Caco-2 (cell line): ENCODE measurements at regions of chr1 and their contacts with region 1.

Region 1: DNA sequence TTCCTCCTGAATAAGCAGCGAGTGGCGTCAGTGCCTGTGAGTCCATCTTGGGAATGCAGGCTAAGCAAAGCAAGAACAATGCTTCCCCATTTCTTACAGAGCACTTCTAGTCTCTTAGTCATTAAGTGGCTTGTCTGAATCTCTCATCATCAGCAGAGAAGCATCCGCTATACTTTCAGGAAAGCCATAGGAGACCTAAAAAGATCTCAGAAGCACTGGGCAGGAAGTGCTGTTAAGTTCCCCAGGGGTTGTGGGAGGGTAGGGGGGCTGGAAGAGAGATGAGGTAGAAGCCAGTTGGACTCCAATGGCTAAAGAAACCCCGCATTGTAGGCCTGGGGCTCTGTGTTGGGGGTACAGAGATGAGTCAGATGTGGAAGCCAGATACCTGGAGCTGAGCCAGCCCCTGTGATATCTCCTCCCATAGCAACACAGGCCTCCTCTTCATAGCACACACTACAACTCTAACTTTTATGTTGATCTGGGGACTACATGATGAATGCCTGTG is 44.9 kb downstream of the SYT6 start:
- DNase-seq: no peak
- H3K4me3 ChIP-seq: no peak overlapping the region
- H3K4me3 Mint-ChIP-seq: no peak overlapping the region
- H3K27ac Mint-ChIP-seq: no peak overlapping the region
- H3K4me1 ChIP-seq: no peaks in the 10 kb centered on the region
- H3K4me1 Mint-ChIP-seq: peaks cover 6% of the 10 kb centered on the region
- H3K27me3 ChIP-seq: no peaks in the 10 kb centered on the region
- H3K27me3 Mint-ChIP-seq: no peaks in the 10 kb centered on the region
- CTCF ChIP-seq: no peak

Region 2: GRCh38 chr1:113978863-113979702 is 129.7 kb before region 1 on chr1 and contains the start of gene OLFML3:
- CTCF ChIA-PET with region 1: interaction called, 23 read pairs
- POLR2A ChIA-PET with region 1: no interaction called
- intact Hi-C with region 1: loop called (anchors 1 kb)
- DNase-seq: peak; percentile 77 to 83
- H3K4me3 ChIP-seq: peak within 1 kb of the TSS; percentile 18
- H3K4me3 Mint-ChIP-seq: peak within 1 kb of the TSS; percentile 66
- H3K27ac Mint-ChIP-seq: peak within 1 kb of the TSS; percentile 93
- H3K4me1 ChIP-seq: peaks cover 15% of the 10 kb centered on the region
- H3K4me1 Mint-ChIP-seq: no peaks in the 10 kb centered on the region
- H3K27me3 ChIP-seq: no peaks in the 10 kb centered on the region
- H3K27me3 Mint-ChIP-seq: no peaks in the 10 kb centered on the region
- CTCF ChIP-seq: peak; percentile 44 to 63
- total RNA-seq, gene OLFML3: 29.1 and 36.5 TPM in 2 replicates

Region 3: GRCh38 chr1:114033974-114034373 is 74.8 kb before region 1 on chr1:
- CTCF ChIA-PET with region 1: no interaction called
- POLR2A ChIA-PET with region 1: no interaction called
- intact Hi-C with region 1: loop called (anchors 1 kb)
- DNase-seq: peak; percentile 71 to 72
- H3K4me3 ChIP-seq: no peak overlapping the region
- H3K4me3 Mint-ChIP-seq: no peak overlapping the region
- H3K27ac Mint-ChIP-seq: no peak overlapping the region
- H3K4me1 ChIP-seq: peaks cover 36% of the 10 kb centered on the region
- H3K4me1 Mint-ChIP-seq: no peaks in the 10 kb centered on the region
- H3K27me3 ChIP-seq: no peaks in the 10 kb centered on the region
- H3K27me3 Mint-ChIP-seq: no peaks in the 10 kb centered on the region
- CTCF ChIP-seq: no peak

Region 4: GRCh38 chr1:114145504-114146151 is 36.8 kb after region 1 on chr1:
- CTCF ChIA-PET with region 1: no interaction called
- POLR2A ChIA-PET with region 1: no interaction called
- intact Hi-C with region 1: loop called (anchors 5 kb)
- DNase-seq: no peak
- H3K4me3 ChIP-seq: no peak overlapping the region
- H3K4me3 Mint-ChIP-seq: no peak overlapping the region
- H3K27ac Mint-ChIP-seq: no peak overlapping the region
- H3K4me1 ChIP-seq: no peaks in the 10 kb centered on the region
- H3K4me1 Mint-ChIP-seq: peaks cover 6% of the 10 kb centered on the region
- H3K27me3 ChIP-seq: no peaks in the 10 kb centered on the region
- H3K27me3 Mint-ChIP-seq: peaks cover 5% of the 10 kb centered on the region
- CTCF ChIP-seq: no peak

Region 5: GRCh38 chr1:114219172-114219868 is 110.5 kb after region 1 on chr1:
- CTCF ChIA-PET with region 1: interaction called, 3 read pairs
- POLR2A ChIA-PET with region 1: no interaction called
- intact Hi-C with region 1: loop called (anchors 2 kb)
- DNase-seq: peak in 1 of 2 experiments; percentile 11
- H3K4me3 ChIP-seq: no peak overlapping the region
- H3K4me3 Mint-ChIP-seq: no peak overlapping the region
- H3K27ac Mint-ChIP-seq: no peak overlapping the region
- H3K4me1 ChIP-seq: no peaks in the 10 kb centered on the region
- H3K4me1 Mint-ChIP-seq: no peaks in the 10 kb centered on the region
- H3K27me3 ChIP-seq: no peaks in the 10 kb centered on the region
- H3K27me3 Mint-ChIP-seq: peaks cover 5% of the 10 kb centered on the region
- CTCF ChIP-seq: peak in 1 of 2 experiments; percentile 20

Region 6: DNA sequence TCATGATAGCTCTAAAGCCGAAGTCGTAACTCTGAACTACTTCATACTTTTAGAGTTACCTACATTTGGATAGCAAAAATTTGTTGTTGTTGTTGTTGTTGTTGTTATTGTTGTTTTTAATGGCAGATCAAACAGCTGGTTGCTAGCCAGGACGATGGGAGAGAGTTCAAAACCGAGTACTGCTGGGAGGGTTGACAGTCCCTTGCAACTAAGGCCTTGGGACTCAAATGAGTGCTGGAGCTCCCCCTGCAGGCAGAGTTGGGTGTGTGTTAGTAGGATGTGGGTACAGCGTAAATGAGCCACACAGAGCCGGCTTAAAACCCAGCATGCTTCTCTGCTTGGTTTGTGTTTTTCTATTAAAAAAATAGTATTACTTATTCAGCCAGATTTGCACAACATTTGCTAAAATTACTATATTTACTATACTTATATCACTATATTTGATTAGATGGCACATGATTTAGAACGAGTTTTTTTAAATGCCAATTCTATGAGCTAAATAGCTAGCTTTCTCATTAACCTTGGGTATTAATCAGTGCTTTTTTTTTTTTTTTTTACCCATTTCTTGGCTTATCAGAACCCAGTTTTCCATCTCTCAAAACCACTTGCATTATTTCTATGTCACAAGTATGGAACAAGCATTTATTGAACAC is 174.1 kb after region 1 on chr1:
- CTCF ChIA-PET with region 1: interaction called, 39 read pairs
- POLR2A ChIA-PET with region 1: no interaction called
- intact Hi-C with region 1: loop called (anchors 2 kb)
- DNase-seq: peak; percentile 76 to 77
- H3K4me3 ChIP-seq: no peak overlapping the region
- H3K4me3 Mint-ChIP-seq: no peak overlapping the region
- H3K27ac Mint-ChIP-seq: no peak overlapping the region
- H3K4me1 ChIP-seq: no peaks in the 10 kb centered on the region
- H3K4me1 Mint-ChIP-seq: no peaks in the 10 kb centered on the region
- H3K27me3 ChIP-seq: no peaks in the 10 kb centered on the region
- H3K27me3 Mint-ChIP-seq: peaks cover 2% of the 10 kb centered on the region
- CTCF ChIP-seq: peak; percentile 74 to 75

Region 7: GRCh38 chr1:114346480-114347029 is 237.8 kb after region 1 on chr1:
- CTCF ChIA-PET with region 1: interaction called, 7 read pairs
- POLR2A ChIA-PET with region 1: no interaction called
- intact Hi-C with region 1: loop called (anchors 5 kb)
- DNase-seq: peak; percentile 87 to 93
- H3K4me3 ChIP-seq: peak overlapping the region; percentile 38
- H3K4me3 Mint-ChIP-seq: peak overlapping the region; percentile 85
- H3K27ac Mint-ChIP-seq: peak overlapping the region; percentile 74
- H3K4me1 ChIP-seq: no peaks in the 10 kb centered on the region
- H3K4me1 Mint-ChIP-seq: no peaks in the 10 kb centered on the region
- H3K27me3 ChIP-seq: no peaks in the 10 kb centered on the region
- H3K27me3 Mint-ChIP-seq: no peaks in the 10 kb centered on the region
- CTCF ChIP-seq: peak; percentile 97 to 99